A549 (cell line): ENCODE measurements at regions of chr12 and their contacts with region 1.

Region 1: DNA sequence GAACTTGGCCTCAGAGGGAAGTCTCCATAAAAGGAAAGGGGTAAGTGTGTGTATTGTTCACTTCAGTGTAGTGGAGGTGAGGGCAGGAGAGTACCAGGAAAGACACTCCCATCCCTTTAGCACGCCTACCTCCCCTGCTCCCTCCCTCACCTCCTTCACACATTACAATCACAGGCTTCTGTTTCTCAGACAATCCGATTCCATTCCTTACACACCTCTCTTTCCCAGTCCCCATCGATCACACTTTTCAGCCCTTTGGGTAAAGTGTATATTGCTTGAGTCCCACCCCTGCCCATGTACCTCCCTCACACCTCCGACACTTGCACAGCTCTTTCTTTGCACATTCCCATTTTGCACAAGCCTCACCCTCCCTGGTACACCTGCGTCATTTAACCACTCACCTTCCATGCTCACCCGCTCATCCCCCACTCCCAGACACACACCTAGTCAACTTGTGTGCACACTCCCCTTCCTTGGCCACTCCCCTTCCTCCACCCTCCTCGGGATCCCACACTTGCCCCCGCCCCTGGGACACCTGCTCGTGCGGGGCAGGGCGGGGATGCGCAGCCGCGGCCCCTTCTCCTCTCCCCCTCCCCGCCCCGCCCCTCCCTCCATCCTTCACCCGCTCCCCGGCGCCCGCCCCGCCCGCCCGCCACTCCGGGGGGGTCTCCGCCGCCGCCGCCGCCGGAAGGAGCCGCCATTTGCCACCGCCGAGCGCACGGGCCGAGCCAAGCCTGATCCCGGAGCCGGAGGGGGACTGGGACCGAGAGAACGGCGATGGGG is at the start of gene MARCHF9:
- DNase-seq: peak in 1 of 2 experiments; percentile 59
- ATAC-seq: peak; percentile 21 to 32; a peak in 3 of 6 replicates
- H3K4me3 ChIP-seq: peak within 1 kb of the TSS; percentile 77
- H3K27ac ChIP-seq: peak within 1 kb of the TSS; percentile 71 to 94
- H3K4me1 ChIP-seq: peaks cover 34% of the 10 kb centered on the region
- CTCF ChIP-seq: no peak
- EP300 ChIP-seq: no peak
- POLR2A ChIP-seq: no peak
- RAD21 ChIP-seq: no peak
- polyA plus RNA-seq, gene MARCHF9: 7.2 and 8.4 TPM in 2 replicates

Region 2: DNA sequence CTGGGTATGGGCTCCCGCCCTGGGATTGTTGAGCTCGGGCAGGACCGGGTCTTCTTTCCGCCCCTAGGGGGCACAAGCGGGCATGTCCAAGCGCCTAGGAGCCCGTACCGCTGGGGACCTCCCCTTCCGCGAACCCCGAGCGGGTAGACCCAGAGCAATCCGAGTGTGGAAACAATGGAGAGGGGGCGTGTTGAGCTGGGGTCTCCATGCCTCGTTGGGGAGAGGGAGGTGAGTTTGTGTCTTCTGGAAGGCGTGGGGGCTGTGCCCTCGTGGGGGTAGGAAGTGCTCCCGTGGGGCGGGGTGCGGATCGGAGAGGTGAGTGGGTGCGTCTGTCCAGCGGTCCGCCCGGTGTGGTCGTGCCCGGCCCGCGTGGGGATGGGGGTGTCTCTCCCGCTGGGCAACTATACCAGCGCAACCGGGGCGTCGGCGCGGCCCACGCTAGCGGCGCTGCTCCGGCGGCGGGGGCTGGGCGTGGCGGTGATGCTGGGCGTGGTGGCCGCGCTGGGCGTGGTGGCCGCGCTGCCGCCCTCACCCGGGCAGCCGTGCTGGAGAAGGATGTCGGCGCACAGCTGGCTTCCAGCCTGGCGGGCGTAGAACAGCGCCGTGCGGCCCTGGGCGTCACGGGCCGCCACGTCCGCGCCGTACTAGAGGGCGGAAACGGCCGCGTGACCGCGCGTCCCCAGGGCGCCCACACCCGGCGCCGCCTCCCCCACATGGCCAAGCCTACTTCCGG is 28.3 kb before region 1 on chr12:
- CTCF ChIA-PET with region 1: interaction called, 20 read pairs
- POLR2A ChIA-PET with region 1: interaction called, 3 read pairs
- DNase-seq: peak; percentile 89 to 97
- ATAC-seq: peak; percentile 87 to 95
- H3K4me3 ChIP-seq: peak overlapping the region; percentile 96
- H3K27ac ChIP-seq: peak overlapping the region; percentile 97 to 98
- H3K4me1 ChIP-seq: peaks cover 18% of the 10 kb centered on the region
- CTCF ChIP-seq: peak; percentile 82
- EP300 ChIP-seq: no peak
- POLR2A ChIP-seq: peak; percentile 77
- RAD21 ChIP-seq: peak; percentile 42 to 52; a peak in 3 of 5 replicates

Region 3: DNA sequence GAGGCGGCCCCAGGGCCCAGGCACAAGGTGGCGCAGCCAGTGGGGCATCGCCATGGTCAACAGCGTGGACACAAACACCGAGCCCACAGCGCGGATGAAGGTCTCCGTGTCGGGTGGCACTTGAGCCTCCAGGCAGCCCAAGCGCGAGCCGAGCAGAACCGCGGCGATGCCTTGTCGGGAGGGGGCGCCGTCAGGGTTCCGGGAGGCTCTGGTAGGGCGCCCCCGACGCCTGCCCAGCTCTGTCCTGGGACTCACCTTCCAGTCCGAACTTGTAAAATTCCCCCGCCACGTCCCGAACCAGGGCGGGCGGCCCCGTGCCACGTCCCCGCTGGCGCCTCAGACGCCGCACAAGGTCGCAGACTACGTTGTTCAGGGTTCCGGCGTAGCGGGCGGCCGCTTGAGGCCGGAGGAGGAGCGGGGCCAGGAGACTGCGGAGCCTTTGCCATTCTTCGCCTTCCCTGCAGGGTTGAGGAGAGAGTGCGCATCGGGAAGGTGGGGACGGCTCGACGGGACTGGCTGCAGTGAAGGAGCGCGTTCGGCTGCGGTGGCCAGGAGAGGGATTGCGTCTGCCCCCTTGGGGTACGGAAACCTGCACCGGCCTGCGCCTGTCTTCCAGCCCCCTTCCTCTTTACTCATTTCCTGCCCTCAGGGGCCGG is 10.6 kb after region 1 on chr12:
- CTCF ChIA-PET with region 1: interaction called, 117 read pairs
- POLR2A ChIA-PET with region 1: interaction called, 3 read pairs
- DNase-seq: peak; percentile 70 to 74
- ATAC-seq: peak; percentile 72 to 83
- H3K4me3 ChIP-seq: peak overlapping the region; percentile 52
- H3K27ac ChIP-seq: peak overlapping the region; percentile 62 to 88; a peak in 5 of 6 replicates
- H3K4me1 ChIP-seq: peaks cover 25% of the 10 kb centered on the region
- CTCF ChIP-seq: peak; percentile 67
- EP300 ChIP-seq: no peak
- POLR2A ChIP-seq: peak; percentile 8; the same call in 1 of the 2 replicates
- RAD21 ChIP-seq: no peak

Region 4: DNA sequence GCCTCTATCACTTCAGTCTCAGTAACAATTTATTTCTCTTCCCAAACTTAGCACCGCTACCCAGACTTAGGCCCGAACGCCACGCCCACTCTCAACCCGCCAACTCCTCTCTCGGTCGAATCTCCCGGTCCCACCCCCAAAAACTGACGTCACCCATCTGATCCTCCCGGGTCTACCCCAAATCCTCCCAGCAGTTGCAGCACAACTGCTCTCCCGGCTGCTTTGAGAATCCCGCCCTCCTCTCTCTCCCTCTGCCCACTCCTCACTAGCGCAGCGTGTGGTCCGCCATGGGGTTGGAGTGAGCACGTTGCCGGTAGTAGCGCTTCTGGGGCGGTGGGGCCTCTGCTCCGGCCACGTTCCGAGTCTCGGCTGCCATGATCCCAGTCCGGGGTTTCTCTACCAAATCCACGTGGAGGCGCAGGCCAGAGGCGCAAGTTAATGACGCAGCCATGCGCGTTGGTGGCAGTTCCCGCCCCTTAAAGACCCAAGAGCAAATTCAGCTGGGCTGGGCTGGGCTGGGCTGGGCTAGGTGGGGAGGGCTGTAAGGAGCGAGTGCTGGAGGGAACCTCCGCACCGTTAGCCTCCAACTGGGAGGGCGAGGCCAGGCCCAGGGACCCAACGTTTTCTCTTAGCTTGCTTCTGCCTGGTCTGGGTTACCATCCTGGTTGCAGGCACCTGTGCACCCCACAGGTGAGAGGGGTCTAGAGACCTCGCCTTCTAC is 17.3 kb after region 1 on chr12 and contains the start of gene METTL1:
- CTCF ChIA-PET with region 1: interaction called, 117 read pairs
- POLR2A ChIA-PET with region 1: interaction called, 6 read pairs
- DNase-seq: peak; percentile 96 to 99
- ATAC-seq: peak; percentile 79 to 91
- H3K4me3 ChIP-seq: peak within 1 kb of the TSS; percentile 77
- H3K27ac ChIP-seq: peak within 1 kb of the TSS; percentile 78 to 94
- H3K4me1 ChIP-seq: peaks cover 19% of the 10 kb centered on the region
- CTCF ChIP-seq: no peak
- EP300 ChIP-seq: no peak
- POLR2A ChIP-seq: peak; percentile 88
- RAD21 ChIP-seq: no peak
- polyA plus RNA-seq, gene METTL1: 60.2 and 71.3 TPM in 2 replicates

Region 5: DNA sequence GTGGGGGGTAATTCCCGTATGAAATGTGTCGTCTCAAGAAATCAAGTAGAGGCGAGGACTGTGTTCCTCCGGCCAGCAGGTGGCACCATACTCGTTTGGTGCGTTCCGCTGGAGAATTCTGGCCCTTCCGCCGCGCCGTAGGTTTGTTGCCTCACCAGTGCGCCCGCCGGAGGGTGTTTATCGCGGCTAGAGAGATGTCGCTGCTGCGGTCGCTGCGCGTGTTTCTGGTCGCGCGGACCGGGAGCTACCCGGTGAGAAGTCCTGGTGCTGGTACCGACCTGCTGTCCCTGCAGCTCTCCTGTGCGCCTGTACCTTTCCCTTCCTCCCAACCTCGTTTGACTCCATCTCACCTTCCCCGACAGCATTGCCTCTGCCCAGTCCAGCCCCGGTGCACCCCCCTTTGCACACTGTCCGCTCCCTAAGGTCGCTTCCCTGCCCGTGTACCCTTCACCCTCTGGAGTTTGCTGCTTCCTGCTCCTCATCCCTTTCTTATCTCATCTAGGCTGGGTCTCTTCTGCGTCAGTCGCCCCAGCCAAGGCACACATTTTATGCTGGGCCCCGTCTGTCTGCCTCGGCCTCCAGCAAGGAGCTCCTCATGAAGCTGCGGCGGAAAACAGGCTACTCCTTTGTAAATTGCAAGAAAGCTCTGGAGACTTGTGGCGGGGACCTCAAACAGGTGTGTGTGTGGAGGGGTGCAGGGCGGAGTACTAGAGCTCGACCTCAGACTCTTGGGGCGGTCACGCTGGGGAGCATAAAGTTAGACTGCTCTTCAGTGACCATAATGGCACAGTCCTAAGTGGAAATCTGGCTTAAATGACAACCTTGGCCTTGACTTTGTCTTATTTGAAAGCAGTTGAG is 28.2 kb after region 1 on chr12 and contains the start of gene TSFM:
- CTCF ChIA-PET with region 1: interaction called, 22 read pairs
- POLR2A ChIA-PET with region 1: no interaction called
- DNase-seq: peak; percentile 81 to 97
- ATAC-seq: peak; percentile 89 to 94
- H3K4me3 ChIP-seq: peak within 1 kb of the TSS; percentile 83
- H3K27ac ChIP-seq: peak within 1 kb of the TSS; percentile 75 to 89
- H3K4me1 ChIP-seq: peaks cover 8% of the 10 kb centered on the region
- CTCF ChIP-seq: peak; percentile 88
- EP300 ChIP-seq: no peak
- POLR2A ChIP-seq: peak; percentile 83
- RAD21 ChIP-seq: peak; percentile 22 to 39; a peak in 1 of 5 replicates
- polyA plus RNA-seq, gene TSFM: 31.7 and 39.9 TPM in 2 replicates

Region 6: DNA sequence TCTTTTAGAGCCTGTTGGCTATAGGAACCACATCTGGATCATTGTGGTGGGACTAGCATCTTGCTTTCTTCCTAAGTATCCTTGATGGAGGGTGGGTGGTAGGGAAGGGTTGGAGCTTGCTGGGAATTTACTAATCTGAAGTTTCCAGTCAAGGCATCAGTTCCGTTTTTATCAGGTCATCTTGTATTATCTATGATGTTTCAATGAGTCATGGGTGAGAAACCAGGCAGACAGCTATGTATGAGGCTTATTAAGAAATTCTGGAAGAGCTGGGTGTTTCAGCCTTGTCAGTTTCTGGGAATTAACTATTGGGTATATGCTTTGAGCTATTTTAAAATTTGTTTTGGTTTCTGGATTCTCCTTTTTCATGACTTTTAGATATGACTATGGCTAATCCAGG is 39.3 kb after region 1 on chr12:
- CTCF ChIA-PET with region 1: interaction called, 10 read pairs
- POLR2A ChIA-PET with region 1: no interaction called
- DNase-seq: no peak
- ATAC-seq: peak; percentile 56 to 63; a peak in 4 of 6 replicates
- H3K4me3 ChIP-seq: no peak overlapping the region
- H3K27ac ChIP-seq: no peak overlapping the region
- H3K4me1 ChIP-seq: peaks cover 11% of the 10 kb centered on the region; the same call in 2 of the 3 replicates
- CTCF ChIP-seq: no peak
- EP300 ChIP-seq: no peak
- POLR2A ChIP-seq: no peak
- RAD21 ChIP-seq: no peak

Region 7: GRCh38 chr12:57822392-57823130 is 68.0 kb after region 1 on chr12:
- CTCF ChIA-PET with region 1: interaction called, 10 read pairs
- POLR2A ChIA-PET with region 1: no interaction called
- DNase-seq: no peak
- ATAC-seq: no peak
- H3K4me3 ChIP-seq: no peak overlapping the region
- H3K27ac ChIP-seq: no peak overlapping the region
- H3K4me1 ChIP-seq: no peaks in the 10 kb centered on the region
- CTCF ChIP-seq: no peak
- EP300 ChIP-seq: no peak
- POLR2A ChIP-seq: no peak
- RAD21 ChIP-seq: no peak

Region 8: DNA sequence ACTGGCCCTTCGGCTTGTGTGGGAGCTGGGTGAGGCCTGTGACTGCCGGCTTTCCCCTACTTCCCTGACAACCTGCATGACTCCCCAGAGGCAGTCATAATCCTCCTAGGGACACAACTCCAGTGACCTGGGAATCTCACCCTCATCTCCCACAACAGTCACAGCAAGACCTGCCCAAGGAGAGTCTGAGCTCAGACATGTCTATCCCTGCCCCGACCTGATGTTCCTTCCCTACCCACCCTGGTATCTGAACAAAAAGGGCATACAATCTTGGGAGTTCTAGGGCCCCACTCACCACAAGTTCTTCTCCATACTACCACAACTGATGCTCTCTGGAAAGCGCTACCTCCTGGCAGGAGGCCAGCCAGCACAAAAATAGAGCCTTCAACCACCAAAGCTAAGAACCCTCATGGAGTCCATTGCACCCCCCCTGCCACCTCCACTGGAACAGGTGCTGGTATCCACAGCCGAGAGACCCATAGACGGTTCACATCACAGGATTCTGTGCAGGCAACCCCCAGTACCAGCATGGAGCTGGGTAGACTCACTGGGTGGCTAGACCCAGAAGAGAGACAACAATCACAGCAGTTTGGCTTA is 203.6 kb after region 1 on chr12:
- CTCF ChIA-PET with region 1: no interaction called
- POLR2A ChIA-PET with region 1: no interaction called
- DNase-seq: no peak
- ATAC-seq: no peak
- H3K4me3 ChIP-seq: no peak overlapping the region
- H3K27ac ChIP-seq: no peak overlapping the region
- H3K4me1 ChIP-seq: no peaks in the 10 kb centered on the region
- CTCF ChIP-seq: no peak
- EP300 ChIP-seq: no peak
- POLR2A ChIP-seq: no peak
- RAD21 ChIP-seq: no peak

Region 9: GRCh38 chr12:58131986-58132755 is 377.6 kb after region 1 on chr12:
- CTCF ChIA-PET with region 1: no interaction called
- POLR2A ChIA-PET with region 1: no interaction called
- DNase-seq: no peak
- ATAC-seq: no peak
- H3K4me3 ChIP-seq: no peak overlapping the region
- H3K27ac ChIP-seq: no peak overlapping the region
- H3K4me1 ChIP-seq: no peaks in the 10 kb centered on the region
- CTCF ChIP-seq: no peak
- EP300 ChIP-seq: no peak
- POLR2A ChIP-seq: no peak
- RAD21 ChIP-seq: no peak